ENCODE measurements at regions of chr1 and their contacts with region 1.

Region 1: GRCh38 chr1:202716654-202717053 is 6.4 kb upstream of the SYT2 start:
- DNase-seq: no peak
- ATAC-seq: no peak
- H3K4me3 ChIP-seq: no peak overlapping the region
- H3K27ac ChIP-seq: no peak overlapping the region
- H3K4me1 ChIP-seq: peaks cover 17% of the 10 kb centered on the region
- CTCF ChIP-seq: no peak
- EP300 ChIP-seq: no peak
- POLR2A ChIP-seq: no peak
- RAD21 ChIP-seq: no peak

Region 2: GRCh38 chr1:202348509-202349205 is 368.0 kb before region 1 on chr1 and contains the start of gene PPP1R12B:
- CTCF ChIA-PET with region 1: interaction called, 18 read pairs
- POLR2A ChIA-PET with region 1: interaction called, 3 read pairs
- DNase-seq: peak; percentile 86 to 99
- ATAC-seq: peak; percentile 98 to 99
- H3K4me3 ChIP-seq: peak within 1 kb of the TSS; percentile 86
- H3K27ac ChIP-seq: peak within 1 kb of the TSS; percentile 87 to 92
- H3K4me1 ChIP-seq: peaks cover 38% of the 10 kb centered on the region
- CTCF ChIP-seq: no peak
- EP300 ChIP-seq: no peak
- POLR2A ChIP-seq: peak; percentile 77
- RAD21 ChIP-seq: 0 out of 5 replicates have a peak, but pooled peaks of 1 of the 2 experiments have one; percentile 16
- polyA plus RNA-seq, gene PPP1R12B: 12.1 and 14.8 TPM in 2 replicates

Region 3: DNA sequence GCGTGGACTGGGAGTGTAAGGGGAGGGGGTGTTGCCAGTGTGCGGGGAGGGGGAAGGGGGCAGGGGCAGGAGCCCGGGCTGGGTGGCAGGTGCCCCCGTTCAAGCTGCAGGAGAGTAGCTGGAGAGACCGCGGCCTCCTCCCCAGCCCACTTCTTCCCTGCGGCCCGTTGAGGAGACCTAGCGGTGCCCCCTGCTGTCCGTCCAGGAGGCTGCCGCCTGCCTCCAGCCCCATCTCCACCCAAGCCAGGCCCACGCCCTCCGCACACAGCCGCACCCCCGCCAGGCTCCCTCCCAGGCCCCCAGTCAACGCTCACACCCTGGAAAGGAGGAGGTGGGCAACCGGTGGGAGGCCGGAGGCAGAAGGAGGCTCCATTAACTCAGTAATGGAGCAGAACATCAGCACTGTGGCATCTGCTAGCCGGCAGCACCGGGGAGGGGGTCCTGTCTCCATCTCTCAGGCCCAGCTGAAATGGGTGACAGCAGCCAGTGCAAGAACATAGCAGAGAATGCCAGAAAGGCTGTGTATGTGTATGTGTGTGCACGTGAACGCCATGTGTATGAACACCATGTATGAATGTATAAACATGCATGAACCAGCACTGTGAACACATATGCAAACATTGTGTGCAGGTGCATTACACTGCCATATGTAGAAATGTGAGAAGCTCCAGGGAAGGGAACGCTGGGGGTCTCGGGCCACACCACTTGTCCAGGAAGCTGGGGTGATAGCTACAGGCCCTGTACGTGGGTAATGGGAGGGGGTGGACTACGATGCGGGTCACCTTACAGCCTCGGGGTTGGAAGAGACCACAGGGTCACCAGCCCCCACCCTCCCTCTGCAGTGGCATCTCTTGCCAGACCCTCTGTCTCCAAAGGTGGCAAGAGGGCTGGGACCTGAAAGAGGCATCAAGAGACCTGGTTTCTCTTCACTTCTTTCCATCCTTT is 91.0 kb before region 1 on chr1:
- CTCF ChIA-PET with region 1: interaction called, 12 read pairs
- POLR2A ChIA-PET with region 1: no interaction called
- DNase-seq: peak; percentile 79 to 86
- ATAC-seq: peak; percentile 89 to 97
- H3K4me3 ChIP-seq: no peak overlapping the region
- H3K27ac ChIP-seq: peak overlapping the region; percentile 35 to 48; a peak in 3 of 6 replicates
- H3K4me1 ChIP-seq: peaks cover 11% of the 10 kb centered on the region
- CTCF ChIP-seq: peak; percentile 60
- EP300 ChIP-seq: no peak
- POLR2A ChIP-seq: no peak
- RAD21 ChIP-seq: peak; percentile 68 to 75

Region 4: GRCh38 chr1:202654079-202654478 is 62.6 kb before region 1 on chr1:
- CTCF ChIA-PET with region 1: interaction called, 31 read pairs
- POLR2A ChIA-PET with region 1: no interaction called
- DNase-seq: no peak
- ATAC-seq: no peak
- H3K4me3 ChIP-seq: no peak overlapping the region
- H3K27ac ChIP-seq: no peak overlapping the region
- H3K4me1 ChIP-seq: no peaks in the 10 kb centered on the region
- CTCF ChIP-seq: no peak
- EP300 ChIP-seq: no peak
- POLR2A ChIP-seq: no peak
- RAD21 ChIP-seq: no peak

Region 5: GRCh38 chr1:202671122-202671797 is 45.4 kb before region 1 on chr1:
- CTCF ChIA-PET with region 1: interaction called, 11 read pairs
- POLR2A ChIA-PET with region 1: no interaction called
- DNase-seq: no peak
- ATAC-seq: no peak
- H3K4me3 ChIP-seq: no peak overlapping the region
- H3K27ac ChIP-seq: no peak overlapping the region
- H3K4me1 ChIP-seq: no peaks in the 10 kb centered on the region
- CTCF ChIP-seq: no peak
- EP300 ChIP-seq: no peak
- POLR2A ChIP-seq: no peak
- RAD21 ChIP-seq: no peak

Region 6: DNA sequence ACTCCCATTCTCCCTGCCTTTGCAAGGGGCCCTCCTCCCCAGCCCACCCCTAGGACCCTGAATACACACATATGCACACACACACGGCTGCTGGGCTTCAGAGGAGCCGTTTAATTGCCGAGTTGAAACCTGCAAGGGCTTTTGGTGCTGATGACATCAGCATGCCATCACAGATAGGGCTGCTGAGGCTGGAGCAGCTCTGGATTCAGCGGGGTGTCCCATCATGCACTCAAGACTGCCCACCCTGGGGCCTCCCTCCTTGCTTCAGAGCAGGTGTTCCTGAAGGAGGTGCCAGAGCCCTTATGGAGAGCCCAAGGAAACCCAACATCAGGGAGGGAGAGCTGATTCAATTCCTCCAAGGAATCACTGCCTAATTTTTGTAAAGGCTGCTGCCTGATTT is 12.1 kb before region 1 on chr1:
- CTCF ChIA-PET with region 1: interaction called, 37 read pairs
- POLR2A ChIA-PET with region 1: interaction called, 3 read pairs
- DNase-seq: no peak
- ATAC-seq: no peak
- H3K4me3 ChIP-seq: no peak overlapping the region
- H3K27ac ChIP-seq: no peak overlapping the region
- H3K4me1 ChIP-seq: peaks cover 3% of the 10 kb centered on the region; the same call in 1 of the 3 replicates
- CTCF ChIP-seq: no peak
- EP300 ChIP-seq: no peak
- POLR2A ChIP-seq: no peak
- RAD21 ChIP-seq: no peak

Region 7: GRCh38 chr1:202728951-202729350 is 12.3 kb after region 1 on chr1:
- CTCF ChIA-PET with region 1: interaction called, 38 read pairs
- POLR2A ChIA-PET with region 1: no interaction called
- DNase-seq: no peak
- ATAC-seq: no peak
- H3K4me3 ChIP-seq: no peak overlapping the region
- H3K27ac ChIP-seq: no peak overlapping the region
- H3K4me1 ChIP-seq: no peaks in the 10 kb centered on the region
- CTCF ChIP-seq: no peak
- EP300 ChIP-seq: no peak
- POLR2A ChIP-seq: no peak
- RAD21 ChIP-seq: no peak

Region 8: DNA sequence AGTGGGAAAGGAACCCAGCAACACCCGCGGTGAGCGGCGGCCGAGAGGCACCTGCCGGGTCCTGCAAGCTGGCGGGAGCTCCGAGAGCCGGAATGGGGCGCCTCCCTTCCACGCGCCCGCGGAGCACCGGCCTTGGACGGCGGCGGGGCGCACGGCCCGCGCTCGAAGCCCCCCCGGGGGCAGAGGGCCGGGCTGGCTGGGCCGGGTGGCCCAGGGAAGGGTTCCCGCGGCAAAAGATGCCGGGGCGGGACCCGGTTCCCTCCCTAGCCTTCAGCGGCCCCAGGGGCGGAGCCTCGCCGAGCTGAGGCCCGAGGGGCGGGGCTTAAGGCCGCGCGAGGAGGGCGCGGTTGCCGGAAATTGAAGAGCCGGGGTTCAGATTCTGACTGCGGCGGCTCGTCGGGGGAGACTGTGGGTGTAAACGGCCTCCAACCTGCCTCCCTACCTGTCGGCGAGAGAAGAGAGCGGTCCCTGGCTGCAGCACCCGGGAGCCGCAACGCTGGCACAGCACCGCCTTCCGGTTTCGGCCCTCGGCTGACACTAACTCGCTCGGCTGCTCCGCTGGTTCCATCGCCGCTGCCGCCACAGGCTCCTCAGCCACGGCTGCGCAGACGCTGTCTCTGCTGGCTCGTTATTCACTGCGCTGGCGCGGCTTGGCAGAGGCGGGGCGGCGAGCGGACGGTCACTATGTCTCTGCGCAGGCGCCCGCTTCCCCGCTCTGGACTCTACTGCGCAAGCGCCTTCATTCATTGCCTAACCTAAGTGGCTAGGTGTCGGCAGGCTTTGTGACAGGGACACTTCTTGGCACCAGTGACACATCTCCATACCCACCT is 172.1 kb after region 1 on chr1 and contains the start of gene RABIF:
- CTCF ChIA-PET with region 1: no interaction called
- POLR2A ChIA-PET with region 1: no interaction called
- DNase-seq: peak; percentile 95 to 96
- ATAC-seq: peak; percentile 96 to 98
- H3K4me3 ChIP-seq: peak within 1 kb of the TSS; percentile 73
- H3K27ac ChIP-seq: peak within 1 kb of the TSS; percentile 88 to 92
- H3K4me1 ChIP-seq: peaks cover 13% of the 10 kb centered on the region
- CTCF ChIP-seq: no peak
- EP300 ChIP-seq: no peak
- POLR2A ChIP-seq: peak; percentile 97
- RAD21 ChIP-seq: no peak
- polyA plus RNA-seq, gene RABIF: 22.1 and 23.8 TPM in 2 replicates

Measured in A549 (cell line).